SK-N-SH (cell line): ENCODE measurements at regions of chrX and their contacts with region 1.

Region 1: GRCh38 chrX:65581661-65582339 is 47.2 kb upstream of the LAS1L start:
- DNase-seq: peak; percentile 57
- H3K4me3 ChIP-seq: no peak overlapping the region
- H3K27ac ChIP-seq: no peak overlapping the region
- H3K4me1 ChIP-seq: no peaks in the 10 kb centered on the region
- H3K27me3 ChIP-seq: peaks cover 35% of the 10 kb centered on the region; the same call in 1 of the 2 replicates
- CTCF ChIP-seq: peak; percentile 93
- EP300 ChIP-seq: no peak
- RAD21 ChIP-seq: peak; percentile 91

Region 2: DNA sequence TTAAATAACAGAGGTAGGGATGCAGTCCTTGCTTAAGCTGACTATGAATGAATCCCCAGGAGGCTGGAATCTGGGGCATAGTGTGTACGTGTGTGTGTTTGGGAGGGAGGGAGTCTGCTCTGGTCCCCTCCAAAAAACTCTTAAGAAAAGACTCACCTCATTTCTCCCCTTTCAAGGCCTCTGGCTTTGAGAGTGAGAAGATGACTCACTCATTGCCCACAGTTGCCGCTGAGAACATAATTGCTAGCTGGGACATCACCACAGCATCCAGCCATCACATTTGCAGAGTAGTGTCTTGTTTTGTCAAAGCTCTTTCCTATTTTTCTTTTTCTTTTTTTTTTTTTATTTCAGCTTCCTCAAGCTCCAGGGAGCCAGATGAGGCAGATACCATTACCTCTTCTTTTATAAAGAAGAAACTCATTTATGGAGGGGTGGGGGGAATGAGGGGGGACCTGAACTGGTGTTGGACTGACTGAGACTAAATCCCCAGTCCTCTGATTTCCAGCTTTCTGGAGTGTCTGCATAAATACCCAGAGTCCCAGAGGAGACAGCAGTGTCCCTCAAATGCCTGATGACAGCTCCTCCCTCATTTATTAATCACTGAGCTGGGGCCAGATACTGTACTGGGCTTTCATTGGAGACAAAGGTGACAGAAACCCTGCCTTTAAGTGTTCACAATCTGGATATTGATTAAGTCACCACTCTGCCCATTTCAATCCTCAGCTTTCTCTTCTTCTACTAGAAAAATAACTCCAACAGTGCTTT is 14.7 kb after region 1 on chrX:
- CTCF ChIA-PET with region 1: interaction called, 10 read pairs
- POLR2A ChIA-PET with region 1: no interaction called
- DNase-seq: no peak
- H3K4me3 ChIP-seq: no peak overlapping the region
- H3K27ac ChIP-seq: peak overlapping the region in 1 of 2 experiments; percentile 79; a peak in 2 of 4 replicates
- H3K4me1 ChIP-seq: peaks cover 0 to 11% of the 10 kb centered on the region in 2 experiments; a peak in 1 of 4 replicates
- H3K27me3 ChIP-seq: no peaks in the 10 kb centered on the region; the same call in 1 of the 2 replicates
- CTCF ChIP-seq: no peak
- EP300 ChIP-seq: no peak
- RAD21 ChIP-seq: no peak

Region 3: DNA sequence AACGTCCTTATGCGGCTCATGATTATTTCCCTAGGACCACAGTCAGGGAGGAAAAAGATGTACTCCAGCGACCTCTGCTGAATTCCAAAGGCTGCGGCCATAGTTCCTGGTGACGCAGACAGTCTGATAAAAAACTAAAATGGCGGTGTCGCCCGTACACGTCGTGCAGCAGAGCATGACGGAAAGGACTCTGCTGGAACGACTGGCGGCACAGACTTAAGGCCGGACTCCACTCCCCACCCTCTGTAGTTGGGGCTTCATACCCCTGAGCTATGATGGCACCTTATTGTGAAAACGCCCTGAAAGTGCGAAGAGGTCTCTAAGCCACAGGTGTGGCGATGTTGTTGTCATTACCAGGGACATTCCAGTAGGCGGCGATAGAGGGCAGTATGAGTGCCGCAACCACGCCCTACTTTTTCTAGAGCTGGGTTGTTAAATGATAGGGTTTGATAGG is 1147.0 kb after region 1 on chrX:
- CTCF ChIA-PET with region 1: interaction called, 10 read pairs
- POLR2A ChIA-PET with region 1: no interaction called
- DNase-seq: peak; percentile 35
- H3K4me3 ChIP-seq: peak overlapping the region; percentile 35 to 52; a peak in 3 of 4 replicates
- H3K27ac ChIP-seq: no peak overlapping the region
- H3K4me1 ChIP-seq: no peaks in the 10 kb centered on the region; a peak in 1 of 4 replicates
- H3K27me3 ChIP-seq: no peaks in the 10 kb centered on the region
- CTCF ChIP-seq: peak; percentile 70
- EP300 ChIP-seq: no peak
- RAD21 ChIP-seq: peak; percentile 33